ENCODE measurements at regions of chr16 and their contacts with region 1.

Region 1: GRCh38 chr16:89860747-89861304 is 12.6 kb upstream of the TCF25 start:
- DNase-seq: peak; percentile 79
- H3K4me3 Mint-ChIP-seq: no peak overlapping the region
- H3K27ac Mint-ChIP-seq: peak overlapping the region; percentile 0
- H3K4me1 Mint-ChIP-seq: peaks cover 34% of the 10 kb centered on the region
- H3K27me3 Mint-ChIP-seq: no peaks in the 10 kb centered on the region

Region 2: GRCh38 chr16:89395141-89395874 is 465.5 kb before region 1 on chr16:
- CTCF ChIA-PET with region 1: no interaction called
- POLR2A ChIA-PET with region 1: no interaction called
- DNase-seq: no peak
- H3K4me3 Mint-ChIP-seq: no peak overlapping the region
- H3K27ac Mint-ChIP-seq: no peak overlapping the region
- H3K4me1 Mint-ChIP-seq: peaks cover 24% of the 10 kb centered on the region
- H3K27me3 Mint-ChIP-seq: no peaks in the 10 kb centered on the region

Region 3: DNA sequence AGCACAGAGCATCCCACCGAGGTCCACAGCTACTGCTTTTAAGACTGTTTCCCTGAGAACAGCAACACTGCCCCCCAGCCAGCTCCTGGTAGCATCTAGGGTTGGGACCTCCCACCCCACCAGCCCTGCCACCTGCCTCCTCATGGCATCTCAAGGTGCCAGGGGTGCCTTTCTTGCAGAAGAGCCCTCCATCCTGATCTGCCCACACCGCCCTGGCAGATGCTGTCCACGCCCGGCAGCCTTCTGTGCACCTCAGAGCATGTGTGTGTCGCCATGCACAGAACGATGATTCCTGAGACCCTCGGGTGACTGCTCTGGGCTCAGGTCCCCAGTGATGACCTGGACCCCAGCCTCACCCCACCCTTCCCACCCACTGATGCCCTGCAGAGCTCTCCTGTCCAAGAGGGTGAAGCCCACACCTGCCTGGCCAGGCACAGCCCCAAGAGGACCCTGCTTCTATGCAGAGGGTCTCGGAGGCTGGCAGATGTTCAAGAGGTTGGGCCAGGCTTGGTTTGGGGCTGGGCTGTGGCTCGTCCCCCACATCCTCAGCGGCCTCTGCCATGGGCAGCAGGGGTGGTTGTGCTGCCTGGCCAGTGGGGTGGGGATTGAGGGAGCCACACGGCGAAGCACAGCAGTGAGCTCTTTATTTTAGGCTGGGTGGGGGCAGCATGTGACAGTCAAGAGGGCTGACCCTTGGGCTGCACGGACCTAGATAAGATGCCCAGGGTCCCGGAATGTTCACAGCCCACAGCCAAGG is 154.1 kb before region 1 on chr16:
- CTCF ChIA-PET with region 1: interaction called, 72 read pairs
- POLR2A ChIA-PET with region 1: interaction called, 4 read pairs
- DNase-seq: no peak
- H3K4me3 Mint-ChIP-seq: no peak overlapping the region
- H3K27ac Mint-ChIP-seq: no peak overlapping the region
- H3K4me1 Mint-ChIP-seq: peaks cover 14% of the 10 kb centered on the region
- H3K27me3 Mint-ChIP-seq: no peaks in the 10 kb centered on the region

Region 4: GRCh38 chr16:89761304-89761922 is 99.4 kb before region 1 on chr16:
- CTCF ChIA-PET with region 1: interaction called, 11 read pairs
- POLR2A ChIA-PET with region 1: no interaction called
- DNase-seq: no peak
- H3K4me3 Mint-ChIP-seq: peak overlapping the region; percentile 76
- H3K27ac Mint-ChIP-seq: peak overlapping the region; percentile 87
- H3K4me1 Mint-ChIP-seq: peaks cover 54% of the 10 kb centered on the region
- H3K27me3 Mint-ChIP-seq: no peaks in the 10 kb centered on the region

Region 5: DNA sequence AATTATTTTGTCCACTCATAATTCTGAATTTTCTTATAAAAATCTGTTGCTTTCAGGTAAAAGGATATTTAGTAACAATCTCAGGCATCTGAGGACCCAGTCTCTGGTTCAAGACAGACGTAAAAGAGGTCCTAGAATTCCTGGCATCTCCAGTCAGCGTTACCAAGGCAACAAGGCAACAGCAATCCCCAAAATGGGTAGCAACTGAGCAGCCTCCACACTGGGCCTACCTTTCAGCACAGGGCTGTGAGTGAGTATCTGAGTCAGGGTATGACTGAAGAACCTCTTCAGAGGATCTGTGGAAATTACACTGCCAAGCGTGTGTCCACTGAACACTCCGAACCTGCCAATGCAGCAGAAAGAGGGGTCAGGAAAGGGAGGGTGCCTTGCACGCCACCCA is 65.2 kb before region 1 on chr16:
- CTCF ChIA-PET with region 1: interaction called, 12 read pairs
- POLR2A ChIA-PET with region 1: interaction called, 3 read pairs
- DNase-seq: no peak
- H3K4me3 Mint-ChIP-seq: no peak overlapping the region
- H3K27ac Mint-ChIP-seq: no peak overlapping the region
- H3K4me1 Mint-ChIP-seq: peaks cover 4% of the 10 kb centered on the region
- H3K27me3 Mint-ChIP-seq: no peaks in the 10 kb centered on the region

Region 6: DNA sequence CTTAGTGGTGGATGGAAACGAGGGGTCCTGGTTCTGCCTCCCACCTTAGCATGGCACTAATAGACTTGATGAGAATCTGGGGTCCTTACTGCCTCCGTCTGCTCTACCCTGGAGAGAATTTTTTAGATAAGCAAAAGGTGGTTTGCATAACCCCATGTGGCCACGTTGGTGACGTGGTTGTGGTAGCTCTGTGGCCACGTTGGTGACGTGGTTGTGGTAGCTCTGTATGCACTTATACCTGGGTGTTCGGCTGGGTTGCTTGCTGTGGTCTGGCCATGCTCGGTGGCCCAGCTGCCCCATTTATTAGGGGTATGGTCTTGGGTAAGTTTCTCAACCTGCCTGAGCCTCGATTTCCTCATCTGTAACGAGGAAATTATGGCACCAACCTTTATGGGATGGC is 19.6 kb before region 1 on chr16:
- CTCF ChIA-PET with region 1: interaction called, 10 read pairs
- POLR2A ChIA-PET with region 1: interaction called, 3 read pairs
- DNase-seq: peak; percentile 88
- H3K4me3 Mint-ChIP-seq: peak overlapping the region; percentile 40
- H3K27ac Mint-ChIP-seq: peak overlapping the region; percentile 64
- H3K4me1 Mint-ChIP-seq: peaks cover 47% of the 10 kb centered on the region
- H3K27me3 Mint-ChIP-seq: peaks cover 13% of the 10 kb centered on the region

Region 7: DNA sequence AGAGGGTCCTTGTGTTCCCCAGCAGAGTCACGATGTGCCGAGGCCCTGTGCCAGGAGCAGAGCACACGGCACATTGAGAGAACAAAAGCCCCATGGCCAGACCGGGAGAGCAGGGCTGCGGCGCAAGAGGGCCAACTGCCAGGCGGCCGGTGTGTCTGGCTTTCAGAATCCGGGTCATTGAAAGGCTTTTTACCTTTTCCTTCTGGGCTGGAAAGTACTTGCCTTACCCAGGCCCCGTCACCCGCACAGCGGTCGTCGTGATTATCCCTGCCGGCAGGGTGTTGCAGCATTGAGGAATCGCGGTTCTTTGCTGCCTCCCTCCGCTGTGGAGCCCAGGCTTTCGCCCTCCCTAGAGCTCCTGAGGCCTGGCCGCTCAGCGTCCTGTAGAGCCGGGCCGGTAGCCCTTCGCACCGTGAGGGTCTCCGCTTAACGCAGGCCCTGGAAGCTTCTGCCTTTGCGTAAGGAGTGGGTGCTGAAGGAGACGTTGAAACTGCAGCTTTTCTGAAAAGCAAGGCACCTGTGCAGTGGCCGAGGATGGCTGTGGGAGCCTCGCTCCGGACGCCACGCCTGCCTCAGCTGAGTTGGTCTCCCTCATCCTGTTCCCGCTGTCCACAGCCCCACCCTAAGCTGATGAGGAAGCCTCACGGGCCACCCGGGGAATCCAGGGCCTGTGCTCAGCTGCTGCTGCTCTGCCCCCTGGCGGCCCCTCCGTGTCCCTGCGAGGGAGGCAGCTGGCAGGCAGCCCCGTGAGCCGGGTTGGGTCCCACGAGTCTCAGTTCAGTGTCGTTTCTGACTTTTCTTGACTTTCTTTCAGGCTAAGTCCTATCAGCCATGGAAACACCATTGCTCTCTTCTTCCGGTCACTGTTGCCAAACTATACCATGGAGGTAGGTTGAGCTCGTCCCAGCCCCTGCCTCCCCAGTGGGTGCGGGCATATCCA is 49.2 kb after region 1 on chr16:
- CTCF ChIA-PET with region 1: interaction called, 15 read pairs
- POLR2A ChIA-PET with region 1: no interaction called
- DNase-seq: peak; percentile 77
- H3K4me3 Mint-ChIP-seq: no peak overlapping the region
- H3K27ac Mint-ChIP-seq: no peak overlapping the region
- H3K4me1 Mint-ChIP-seq: peaks cover 10% of the 10 kb centered on the region
- H3K27me3 Mint-ChIP-seq: no peaks in the 10 kb centered on the region

Measured in activated CD4-positive, alpha-beta memory T cell treated with anti-CD3 and anti-CD28 coated beads, Interleukin-2, amount 10 ng/mL, durations not matched to agents 7 days and 5 days (primary cell).